ENCODE measurements at regions of chr16 and their contacts with region 1.

Region 1: DNA sequence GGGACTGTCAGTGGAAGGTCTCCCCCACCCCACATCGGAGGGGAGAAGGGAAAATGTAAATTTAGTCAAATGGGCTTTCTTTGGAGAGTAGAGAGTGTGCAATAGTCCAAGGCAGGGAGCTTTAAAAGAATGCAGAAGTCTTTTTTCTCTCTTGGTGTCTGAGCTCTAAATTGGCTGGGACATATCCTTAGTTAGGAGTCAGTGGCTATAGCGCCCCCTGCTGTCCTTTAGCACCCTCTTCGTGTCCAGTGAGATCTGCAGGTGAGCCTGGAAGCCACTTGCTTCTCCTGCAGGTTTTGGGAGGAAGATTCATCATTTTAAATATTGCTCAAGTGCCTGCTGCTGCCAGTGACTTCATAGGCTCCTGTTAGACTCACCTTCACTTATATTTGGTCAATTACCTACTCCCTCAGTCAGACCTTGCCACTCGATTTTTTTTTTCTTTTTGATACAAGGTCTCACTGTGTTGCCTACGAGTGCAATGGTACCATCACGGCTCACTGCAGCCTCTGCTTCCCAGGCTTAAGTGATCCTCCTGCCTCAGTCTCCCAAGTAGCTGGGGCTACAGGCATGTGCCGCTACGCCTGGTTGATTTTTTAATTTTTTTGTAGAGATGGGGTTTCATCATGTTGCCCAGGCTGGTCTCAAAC is 174.8 kb downstream of the PRKCB start:
- DNase-seq: peak; percentile 92

Region 2: GRCh38 chr16:23803591-23804123 is 206.9 kb before region 1 on chr16:
- intact Hi-C with region 1: loop called (anchors 5 kb)
- DNase-seq: peak; percentile 86

Region 3: GRCh38 chr16:24054741-24055491 is 44.4 kb after region 1 on chr16:
- intact Hi-C with region 1: loop called in 1 of 2 experiments (anchors 1 kb)
- DNase-seq: no peak

Measured in posterior vena cava (tissue), 2 donors.